AG04449 (cell line): ENCODE measurements at regions of chr5 and their contacts with region 1.

Region 1: GRCh38 chr5:59188419-59189225 is 605.7 kb downstream of the RAB3C start:
- DNase-seq: no peak
- H3K4me3 ChIP-seq: no peak overlapping the region
- CTCF ChIP-seq: peak; percentile 39

Region 2: DNA sequence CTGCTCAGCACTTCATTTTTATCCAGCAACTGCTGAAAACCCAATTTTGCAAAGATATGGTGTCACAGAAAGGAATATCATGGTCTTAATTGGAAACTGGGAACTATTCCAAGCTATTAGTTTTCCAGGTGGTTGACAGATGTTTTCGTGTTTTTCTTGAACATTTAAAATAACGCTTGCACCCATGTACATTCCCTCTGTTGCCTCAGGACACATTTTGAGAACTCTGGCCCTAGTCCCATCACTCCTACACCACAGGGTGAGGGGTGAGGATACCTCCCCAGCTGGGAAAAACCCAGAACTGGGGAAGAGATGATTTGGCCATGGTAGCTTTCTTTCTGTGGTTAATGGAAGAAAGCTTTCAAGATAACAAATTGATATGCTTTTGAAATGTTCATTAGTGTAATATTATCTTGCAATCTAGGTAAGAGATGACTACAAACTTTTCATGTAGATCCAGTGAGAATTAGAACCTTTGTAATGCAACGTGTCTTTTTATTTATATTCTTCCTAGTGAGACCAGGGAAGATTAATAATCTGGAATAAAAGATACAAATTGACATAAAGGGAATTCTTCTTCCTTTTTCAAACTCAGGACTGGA is 21.2 kb after region 1 on chr5:
- CTCF ChIA-PET with region 1: interaction called, 16 read pairs
- POLR2A ChIA-PET with region 1: no interaction called
- DNase-seq: no peak
- H3K4me3 ChIP-seq: no peak overlapping the region
- CTCF ChIP-seq: no peak

Region 3: DNA sequence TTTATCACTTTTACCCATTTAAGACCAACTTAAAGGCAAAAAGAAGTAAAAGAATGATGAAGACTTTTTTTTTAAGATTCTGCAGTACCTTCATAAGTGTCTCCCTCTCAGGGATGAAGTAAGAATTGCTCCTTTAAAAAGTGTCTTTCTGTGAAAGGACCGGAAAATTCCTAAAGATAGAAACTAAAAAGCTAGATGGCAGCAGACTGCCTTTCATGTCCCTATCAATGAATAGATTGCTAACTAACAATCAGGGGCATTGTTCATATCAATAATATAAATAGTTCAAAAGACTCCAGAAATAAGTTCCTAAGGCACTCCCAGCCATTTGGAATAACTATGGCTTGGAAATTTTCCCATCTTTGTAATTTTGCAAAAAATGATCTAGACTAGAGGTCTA is 146.9 kb after region 1 on chr5:
- CTCF ChIA-PET with region 1: interaction called, 13 read pairs
- POLR2A ChIA-PET with region 1: no interaction called
- DNase-seq: no peak
- H3K4me3 ChIP-seq: no peak overlapping the region
- CTCF ChIP-seq: no peak

Region 4: DNA sequence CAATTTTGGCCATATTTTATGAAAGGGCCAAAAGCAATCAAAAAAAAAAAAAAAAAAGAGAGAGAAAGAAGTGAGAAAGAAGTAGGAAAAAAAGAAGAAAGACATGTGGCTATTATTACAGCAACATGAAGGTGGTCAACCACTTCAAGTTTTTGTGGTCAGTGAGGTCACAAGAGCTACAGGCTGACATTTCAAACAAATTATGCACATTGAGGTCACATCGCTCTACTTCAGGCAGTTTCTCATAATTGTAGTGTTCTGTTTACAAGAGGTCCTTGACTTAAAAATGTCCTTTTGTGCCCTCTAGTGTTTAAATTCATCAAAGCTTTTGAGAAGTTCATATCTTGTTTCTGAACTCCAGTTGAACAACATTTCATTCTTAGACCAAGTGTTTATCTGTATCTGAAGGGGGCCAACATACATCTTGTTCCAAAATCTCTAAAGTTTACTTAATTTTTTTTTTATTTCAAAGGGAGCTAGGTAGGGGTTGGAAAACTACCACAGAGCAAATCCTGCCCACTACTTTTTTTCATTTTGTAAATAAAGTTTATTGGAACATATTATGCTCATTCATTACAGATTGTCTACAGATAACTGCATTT is 191.8 kb after region 1 on chr5:
- CTCF ChIA-PET with region 1: interaction called, 367 read pairs
- POLR2A ChIA-PET with region 1: no interaction called
- DNase-seq: peak; percentile 52
- H3K4me3 ChIP-seq: no peak overlapping the region
- CTCF ChIP-seq: peak; percentile 19

Region 5: DNA sequence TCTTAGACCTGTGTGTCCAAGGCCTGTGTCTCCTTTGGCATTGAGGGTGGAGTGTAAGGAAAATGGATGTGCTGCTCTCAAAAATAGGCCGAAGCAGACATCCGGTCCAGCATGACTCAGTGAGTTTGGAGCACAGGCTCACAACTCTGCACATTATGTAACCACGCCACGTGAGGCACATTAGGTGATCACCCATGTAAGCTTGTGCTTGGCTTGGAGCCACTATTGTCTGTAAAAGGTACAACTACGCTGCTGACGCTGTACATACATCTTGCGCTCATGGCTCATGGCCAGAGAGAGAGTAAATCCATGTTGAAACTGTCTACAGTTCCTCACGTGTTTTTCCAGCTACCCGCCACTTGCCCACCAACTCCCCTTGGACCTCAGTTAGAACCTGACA is 527.4 kb after region 1 on chr5:
- CTCF ChIA-PET with region 1: no interaction called
- POLR2A ChIA-PET with region 1: no interaction called
- DNase-seq: no peak
- H3K4me3 ChIP-seq: no peak overlapping the region
- CTCF ChIP-seq: no peak

Region 6: GRCh38 chr5:59793000-59793399 is 604.4 kb after region 1 on chr5:
- CTCF ChIA-PET with region 1: interaction called, 14 read pairs
- POLR2A ChIA-PET with region 1: no interaction called
- DNase-seq: peak; percentile 64
- H3K4me3 ChIP-seq: no peak overlapping the region
- CTCF ChIP-seq: no peak